ENCODE measurements at regions of chr20 and their contacts with region 1.

Region 1: DNA sequence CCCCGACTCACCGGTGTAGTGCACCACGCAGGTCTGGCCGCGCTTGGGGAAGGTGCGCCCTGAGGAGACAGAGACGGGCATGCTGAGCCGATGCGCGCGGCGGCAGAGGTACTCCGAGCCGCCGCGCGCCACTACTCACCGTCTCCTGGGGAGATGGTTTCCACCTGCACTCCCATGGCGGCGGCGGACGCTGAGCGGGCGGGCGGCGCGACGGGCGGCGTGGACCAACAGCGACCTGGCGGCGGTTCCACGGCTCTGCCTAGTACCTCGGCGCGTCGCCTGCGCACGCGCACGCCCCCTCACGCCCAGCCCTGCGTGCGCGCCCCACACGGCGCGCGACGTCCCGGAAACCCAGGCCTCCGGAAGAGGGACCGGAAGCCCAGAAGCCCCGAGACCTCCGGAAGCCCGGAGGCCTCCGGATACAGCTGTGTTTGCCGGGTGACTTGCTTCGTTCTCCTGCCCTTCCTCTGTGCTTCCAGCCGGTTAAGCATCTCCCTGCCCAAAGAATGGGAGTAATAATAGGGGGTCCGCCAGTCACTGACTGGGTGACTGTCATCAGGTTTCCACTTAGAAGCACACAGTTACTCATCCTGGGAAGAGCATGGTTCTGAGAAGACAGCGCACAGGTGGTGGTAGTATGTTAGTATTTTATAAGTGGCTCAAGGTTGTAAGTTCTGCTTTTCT is at the start of gene FKBP1A:
- DNase-seq: peak; percentile 82 to 97
- ATAC-seq: peak; percentile 95 to 98 (median 95)
- H3K4me3 ChIP-seq: peak within 1 kb of the TSS; percentile 49
- H3K4me3 Mint-ChIP-seq: peak within 1 kb of the TSS; percentile 88
- H3K27ac ChIP-seq: peak within 1 kb of the TSS; percentile 67
- H3K27ac Mint-ChIP-seq: peak within 1 kb of the TSS; percentile 89 to 90
- H3K4me1 ChIP-seq: peaks cover 48% of the 10 kb centered on the region
- H3K4me1 Mint-ChIP-seq: peaks cover 32 to 50% of the 10 kb centered on the region in 2 donors
- H3K27me3 ChIP-seq: no peaks in the 10 kb centered on the region
- H3K27me3 Mint-ChIP-seq: peaks cover 13 to 29% of the 10 kb centered on the region in 2 donors
- CTCF ChIP-seq: peak; percentile 17
- total RNA-seq, gene FKBP1A: 74.6 to 76.4 (median 75.4) TPM

Region 2: DNA sequence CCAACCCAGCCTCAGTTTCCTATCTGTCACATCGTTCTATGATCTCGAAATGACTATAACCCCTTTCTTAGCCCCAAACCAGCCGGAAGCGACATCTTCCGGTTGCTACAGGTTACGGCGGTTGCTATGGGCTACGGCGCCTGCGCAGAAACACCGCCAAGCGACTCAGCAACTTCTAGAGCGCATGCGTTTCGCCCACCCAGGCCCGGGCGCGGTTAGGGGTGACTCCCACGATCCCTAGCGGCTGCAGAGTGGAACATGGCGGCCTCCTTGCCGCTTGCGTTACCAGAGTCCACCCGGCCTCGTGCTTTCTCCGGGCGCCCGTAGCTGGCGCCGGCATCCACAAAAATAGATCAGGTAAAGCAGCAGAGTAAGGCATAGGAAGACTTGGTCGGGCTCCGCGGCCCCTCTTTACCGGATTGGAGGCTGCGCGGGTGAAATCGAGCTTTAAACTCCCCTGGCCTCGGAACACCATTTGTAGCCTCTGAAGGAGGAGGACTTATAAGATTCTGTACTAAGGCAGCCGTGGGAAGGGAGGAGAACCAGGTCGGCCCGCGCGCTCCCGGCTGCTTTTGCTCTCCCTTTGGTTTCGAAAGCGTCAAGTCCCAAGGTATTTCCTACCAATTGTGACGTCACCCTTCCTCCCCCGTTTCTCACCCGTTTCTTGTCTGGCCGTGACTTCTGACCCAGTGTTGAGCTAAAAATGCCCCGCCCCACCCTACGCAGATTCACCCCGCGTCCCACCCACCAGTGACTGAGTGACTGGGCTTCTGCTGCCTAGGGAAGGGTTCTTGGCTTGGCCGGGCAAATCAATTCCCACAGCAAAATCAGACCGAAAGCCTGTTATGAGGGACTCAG is 67.6 kb before region 1 on chr20:
- intact Hi-C with region 1: loop called (anchors 1 kb)
- DNase-seq: peak; percentile 98 to 100
- ATAC-seq: peak; percentile 87 to 96 (median 89)
- H3K4me3 ChIP-seq: peak overlapping the region; percentile 76
- H3K4me3 Mint-ChIP-seq: no peak overlapping the region
- H3K27ac ChIP-seq: peak overlapping the region; percentile 94
- H3K27ac Mint-ChIP-seq: no peak overlapping the region
- H3K4me1 ChIP-seq: peaks cover 17% of the 10 kb centered on the region
- H3K4me1 Mint-ChIP-seq: peaks cover 0 to 6% of the 10 kb centered on the region in 2 donors
- H3K27me3 ChIP-seq: no peaks in the 10 kb centered on the region
- H3K27me3 Mint-ChIP-seq: peaks cover 10 to 11% of the 10 kb centered on the region in 2 donors
- CTCF ChIP-seq: no peak

Region 3: GRCh38 chr20:1437235-1437904 is 44.4 kb after region 1 on chr20:
- intact Hi-C with region 1: loop called (anchors 2 kb)
- DNase-seq: peak; percentile 66 to 91
- ATAC-seq: peak; percentile 70 to 73 (median 70)
- H3K4me3 ChIP-seq: no peak overlapping the region
- H3K4me3 Mint-ChIP-seq: no peak overlapping the region
- H3K27ac ChIP-seq: no peak overlapping the region
- H3K27ac Mint-ChIP-seq: no peak overlapping the region
- H3K4me1 ChIP-seq: peaks cover 15% of the 10 kb centered on the region
- H3K4me1 Mint-ChIP-seq: peaks cover 13 to 25% of the 10 kb centered on the region in 2 donors
- H3K27me3 ChIP-seq: peaks cover 12% of the 10 kb centered on the region
- H3K27me3 Mint-ChIP-seq: peaks cover 12 to 26% of the 10 kb centered on the region in 2 donors
- CTCF ChIP-seq: peak; percentile 83

Measured in natural killer cell (primary cell).